K562 (cell line): ENCODE measurements at regions of chr12 and their contacts with region 1.

Region 1: GRCh38 chr12:127280393-127281275 is 986.3 kb upstream of the TMEM132C start:
- DNase-seq: peak; percentile 81 to 86 (median 86)
- ATAC-seq: peak; percentile 99
- H3K4me3 ChIP-seq: no peak overlapping the region
- H3K27ac ChIP-seq: no peak overlapping the region
- H3K4me1 ChIP-seq: peaks cover 0 to 7% of the 10 kb centered on the region in 2 experiments; a peak in 2 of 5 replicates
- H3K27me3 ChIP-seq: peaks cover 0 to 29% of the 10 kb centered on the region in 2 experiments; a peak in 4 of 5 replicates
- CTCF ChIP-seq: peak; percentile 99 to 100 (median 100)
- EP300 ChIP-seq: no peak
- POLR2A ChIP-seq: no peak
- RAD21 ChIP-seq: peak; percentile 65 to 77

Region 2: DNA sequence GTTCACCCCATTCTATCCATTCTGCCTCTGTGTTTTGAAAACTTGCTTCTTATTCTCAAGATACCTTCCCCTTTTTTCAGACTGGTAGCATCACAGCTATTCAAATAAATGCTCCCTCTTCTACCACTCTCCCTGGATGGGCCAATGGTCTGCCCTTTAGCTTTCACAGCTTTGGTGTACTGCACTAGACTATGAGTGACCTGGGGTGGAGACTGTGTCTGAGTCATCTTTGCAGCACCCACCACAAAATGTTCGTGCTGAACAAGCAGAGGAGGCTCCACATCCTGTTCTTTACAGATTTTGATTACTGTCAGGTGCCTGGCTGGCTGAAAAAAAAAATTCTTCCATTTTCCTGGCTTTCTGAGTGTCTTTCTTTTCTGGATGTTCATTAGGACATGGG is 117.7 kb before region 1 on chr12:
- CTCF ChIA-PET with region 1: no interaction called
- POLR2A ChIA-PET with region 1: no interaction called
- in situ Hi-C with region 1: no loop called
- intact Hi-C with region 1: loop called (anchors 5 kb)
- DNase-seq: peak; percentile 22 to 79 (median 42)
- ATAC-seq: peak; percentile 55
- H3K4me3 ChIP-seq: no peak overlapping the region
- H3K27ac ChIP-seq: peak overlapping the region; percentile 44; the same call in 2 of the 3 replicates
- H3K4me1 ChIP-seq: peaks cover 16 to 39% of the 10 kb centered on the region in 2 experiments
- H3K27me3 ChIP-seq: no peaks in the 10 kb centered on the region
- CTCF ChIP-seq: no peak
- EP300 ChIP-seq: 0 out of 2 replicates have a peak, but pooled peaks have one; percentile 17
- POLR2A ChIP-seq: no peak
- RAD21 ChIP-seq: no peak

Region 3: DNA sequence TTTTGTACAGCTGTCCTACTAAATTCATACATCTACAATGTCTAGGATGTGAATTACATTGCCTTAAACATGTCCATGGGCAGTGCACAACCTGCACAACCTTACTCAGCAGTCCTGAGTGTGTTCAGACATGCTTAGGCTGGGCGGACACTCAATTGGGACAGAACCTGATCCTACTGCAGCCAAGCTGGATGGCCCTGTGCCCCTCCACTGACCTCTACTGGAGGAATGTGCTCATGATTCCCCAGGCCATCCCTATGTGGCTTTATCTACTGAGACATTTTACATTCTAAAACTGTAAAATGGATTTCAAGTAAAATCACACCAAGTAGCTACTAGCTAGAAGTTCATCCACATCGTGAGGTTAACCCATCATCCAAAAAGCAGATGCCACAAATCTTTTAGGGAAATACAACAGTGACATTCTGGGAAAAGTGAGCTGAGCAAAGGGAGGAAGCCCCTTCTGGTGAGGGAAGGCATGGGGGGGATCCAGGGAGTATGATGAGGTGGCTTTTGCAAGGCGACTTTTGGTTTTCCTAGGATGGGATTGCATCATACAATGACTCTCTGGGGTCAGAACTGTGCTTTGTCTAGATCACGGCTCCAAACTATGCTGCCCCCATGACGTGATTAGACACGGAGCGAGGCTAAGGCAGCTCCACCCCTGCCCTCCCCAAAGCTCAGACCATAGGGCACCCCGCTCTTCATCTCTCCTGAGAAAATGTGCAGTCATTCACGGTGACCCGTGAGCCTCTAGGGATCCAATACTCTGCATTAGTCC is 74.6 kb after region 1 on chr12:
- CTCF ChIA-PET with region 1: no interaction called
- POLR2A ChIA-PET with region 1: no interaction called
- in situ Hi-C with region 1: no loop called
- intact Hi-C with region 1: loop called (anchors 2 kb)
- DNase-seq: peak; percentile 39 to 53 (median 49)
- ATAC-seq: peak; percentile 94
- H3K4me3 ChIP-seq: no peak overlapping the region
- H3K27ac ChIP-seq: no peak overlapping the region
- H3K4me1 ChIP-seq: no peaks in the 10 kb centered on the region
- H3K27me3 ChIP-seq: no peaks in the 10 kb centered on the region
- CTCF ChIP-seq: peak; percentile 51 to 74 (median 70)
- EP300 ChIP-seq: no peak
- POLR2A ChIP-seq: no peak
- RAD21 ChIP-seq: peak; percentile 44 to 61

Region 4: DNA sequence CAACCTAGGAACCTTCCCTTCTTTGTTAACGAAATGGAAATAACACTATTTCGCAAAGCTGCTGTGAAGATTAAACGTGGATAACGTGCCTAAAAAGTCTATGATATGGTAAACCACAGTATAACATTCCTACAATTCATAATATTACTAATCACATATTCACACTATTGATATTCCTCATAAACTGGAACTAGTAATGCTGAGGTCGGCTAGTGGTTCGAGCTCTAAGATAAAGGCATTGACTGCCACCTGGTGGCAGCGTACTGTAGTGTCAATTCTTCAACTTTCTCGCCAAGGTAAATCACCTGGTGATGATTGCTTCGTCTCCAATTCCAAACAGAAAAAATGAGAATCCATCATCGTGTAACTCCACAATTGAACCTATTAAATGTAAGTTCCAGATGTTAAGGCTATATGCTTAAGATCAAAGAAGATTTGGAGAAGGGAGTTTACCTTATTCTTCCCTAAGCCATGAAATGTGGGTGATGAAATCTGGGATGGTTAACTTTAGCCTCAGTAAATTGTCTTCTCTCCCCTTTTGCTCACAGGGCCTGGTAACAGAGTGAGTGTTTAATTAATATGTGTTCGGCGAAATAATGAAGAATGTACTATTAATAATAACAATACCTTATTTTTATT is 788.8 kb after region 1 on chr12:
- CTCF ChIA-PET with region 1: no interaction called
- POLR2A ChIA-PET with region 1: no interaction called
- in situ Hi-C with region 1: no loop called
- intact Hi-C with region 1: loop called (anchors 5 kb)
- DNase-seq: peak; percentile 26 to 65 (median 50)
- ATAC-seq: peak; percentile 72
- H3K4me3 ChIP-seq: no peak overlapping the region
- H3K27ac ChIP-seq: no peak overlapping the region
- H3K4me1 ChIP-seq: no peaks in the 10 kb centered on the region
- H3K27me3 ChIP-seq: no peaks in the 10 kb centered on the region
- CTCF ChIP-seq: peak; percentile 53 to 66 (median 66)
- EP300 ChIP-seq: no peak
- POLR2A ChIP-seq: no peak
- RAD21 ChIP-seq: peak; percentile 41 to 73